Spleen (tissue), 13 donors: ENCODE measurements at regions of chr21 and their contacts with region 1.

Region 1: GRCh38 chr21:14382835-14383594 is at the start of gene HSPA13:
- DNase-seq: peak; percentile 100
- H3K4me3 ChIP-seq: peak within 1 kb of the TSS; percentile 71 to 92 (median 81)
- H3K27ac ChIP-seq: peak within 1 kb of the TSS; percentile 67 to 95 (median 93)
- H3K4me1 ChIP-seq: peaks cover 14 to 50% (median 37%) of the 10 kb centered on the region in 6 donors
- H3K27me3 ChIP-seq: no peaks in the 10 kb centered on the region
- CTCF ChIP-seq: peak in 3 of 11 experiments; percentile 13 to 41 (median 33)
- POLR2A ChIP-seq: peak; percentile 10 to 48 (median 20)
- total RNA-seq, gene HSPA13: 18.3 to 37.1 (median 23.4) TPM

Region 2: DNA sequence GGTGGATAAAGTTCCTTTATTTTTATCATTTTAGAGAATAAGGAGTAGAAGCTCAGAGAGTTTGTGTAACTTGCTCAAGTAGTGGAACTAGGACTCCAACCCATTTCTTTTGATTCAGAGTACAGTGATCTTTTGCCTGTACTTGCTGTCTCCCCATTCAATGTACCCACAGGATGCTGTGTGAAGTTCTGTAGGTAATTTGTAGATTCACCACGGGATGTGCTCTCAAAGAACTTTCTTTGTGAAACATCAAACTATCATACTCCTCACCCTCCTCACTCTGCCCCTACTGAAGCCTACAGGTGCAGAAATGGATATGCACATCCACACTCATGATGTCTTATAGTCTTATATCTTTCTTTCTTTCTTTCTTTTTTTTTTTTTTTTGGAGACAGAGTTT is 65.8 kb after region 1 on chr21:
- intact Hi-C with region 1: no loop called
- DNase-seq: no peak
- H3K4me3 ChIP-seq: no peak overlapping the region
- H3K27ac ChIP-seq: no peak overlapping the region
- H3K4me1 ChIP-seq: peaks cover 0 to 8% (median 0%) of the 10 kb centered on the region in 6 donors
- H3K27me3 ChIP-seq: no peaks in the 10 kb centered on the region
- CTCF ChIP-seq: no peak
- POLR2A ChIP-seq: no peak

Region 3: DNA sequence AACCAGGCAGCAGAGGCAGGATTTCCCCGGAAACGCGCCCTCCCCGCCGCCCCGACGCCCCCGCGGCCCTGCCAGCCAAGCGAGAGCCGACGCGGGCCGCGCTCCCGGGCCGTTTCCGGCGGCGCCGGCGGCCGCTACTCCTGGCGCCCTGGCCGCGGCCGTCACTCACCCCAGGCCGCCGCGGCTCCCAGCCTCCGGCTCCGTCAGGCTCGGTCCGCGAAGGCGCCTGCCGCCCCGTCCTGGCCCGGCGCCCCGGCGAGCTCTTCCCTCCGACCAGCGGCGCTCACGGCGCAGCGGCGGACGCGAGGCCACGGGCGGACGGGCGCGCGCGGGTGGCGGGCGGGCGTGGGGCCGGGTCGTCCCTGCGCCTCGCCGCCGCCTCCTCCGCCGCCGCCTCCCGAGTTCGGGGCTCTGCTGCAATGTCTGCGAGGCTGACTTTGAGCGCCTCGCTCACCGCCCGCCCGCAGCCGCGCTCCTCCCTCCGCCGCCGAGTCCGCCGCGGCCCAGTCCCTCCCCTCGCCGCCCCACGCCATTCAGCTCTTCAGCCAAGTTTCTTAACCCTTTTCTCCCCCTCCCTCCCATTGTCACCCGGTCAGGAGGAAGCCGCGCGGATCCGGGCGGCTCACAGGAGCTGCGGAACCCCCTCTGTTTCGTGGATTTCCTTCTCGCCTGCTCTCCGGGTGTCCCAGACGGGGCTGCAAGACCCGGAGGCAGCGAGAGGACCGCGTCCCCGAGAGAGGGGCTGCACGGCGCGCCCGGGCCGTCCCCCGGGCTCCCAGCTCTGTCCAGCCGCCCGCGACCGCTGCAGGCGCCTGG is 681.8 kb after region 1 on chr21 and contains the start of gene NRIP1:
- intact Hi-C with region 1: loop called (anchors 10 kb)
- DNase-seq: peak; percentile 98
- H3K4me3 ChIP-seq: peak within 1 kb of the TSS; percentile 70 to 87 (median 74)
- H3K27ac ChIP-seq: peak within 1 kb of the TSS; percentile 92 to 99 (median 97)
- H3K4me1 ChIP-seq: peaks cover 17 to 58% (median 46%) of the 10 kb centered on the region in 6 donors
- H3K27me3 ChIP-seq: no peaks in the 10 kb centered on the region
- CTCF ChIP-seq: no peak
- POLR2A ChIP-seq: peak in 2 of 3 donors; percentile 84 to 86
- total RNA-seq, gene NRIP1: 49.4 to 67.8 (median 53.8) TPM